ENCODE measurements at regions of chr1 and their contacts with region 1.

Region 1: GRCh38 chr1:182143154-182143657 is 81.7 kb upstream of the ZNF648 start:
- DNase-seq: peak; percentile 67 to 85
- H3K4me3 ChIP-seq: no peak overlapping the region
- H3K27ac ChIP-seq: no peak overlapping the region
- H3K4me1 ChIP-seq: peaks cover 48% of the 10 kb centered on the region
- H3K27me3 ChIP-seq: no peaks in the 10 kb centered on the region
- CTCF ChIP-seq: peak; percentile 97

Region 2: GRCh38 chr1:182101415-182102042 is 41.7 kb before region 1 on chr1:
- CTCF ChIA-PET with region 1: interaction called, 3 read pairs
- POLR2A ChIA-PET with region 1: no interaction called
- intact Hi-C with region 1: loop called (anchors 1 kb)
- DNase-seq: peak; percentile 91 to 95
- H3K4me3 ChIP-seq: peak overlapping the region; percentile 0; the same call in 1 of the 2 replicates
- H3K27ac ChIP-seq: peak overlapping the region; percentile 54
- H3K4me1 ChIP-seq: peaks cover 24% of the 10 kb centered on the region
- H3K27me3 ChIP-seq: no peaks in the 10 kb centered on the region
- CTCF ChIP-seq: no peak

Region 3: DNA sequence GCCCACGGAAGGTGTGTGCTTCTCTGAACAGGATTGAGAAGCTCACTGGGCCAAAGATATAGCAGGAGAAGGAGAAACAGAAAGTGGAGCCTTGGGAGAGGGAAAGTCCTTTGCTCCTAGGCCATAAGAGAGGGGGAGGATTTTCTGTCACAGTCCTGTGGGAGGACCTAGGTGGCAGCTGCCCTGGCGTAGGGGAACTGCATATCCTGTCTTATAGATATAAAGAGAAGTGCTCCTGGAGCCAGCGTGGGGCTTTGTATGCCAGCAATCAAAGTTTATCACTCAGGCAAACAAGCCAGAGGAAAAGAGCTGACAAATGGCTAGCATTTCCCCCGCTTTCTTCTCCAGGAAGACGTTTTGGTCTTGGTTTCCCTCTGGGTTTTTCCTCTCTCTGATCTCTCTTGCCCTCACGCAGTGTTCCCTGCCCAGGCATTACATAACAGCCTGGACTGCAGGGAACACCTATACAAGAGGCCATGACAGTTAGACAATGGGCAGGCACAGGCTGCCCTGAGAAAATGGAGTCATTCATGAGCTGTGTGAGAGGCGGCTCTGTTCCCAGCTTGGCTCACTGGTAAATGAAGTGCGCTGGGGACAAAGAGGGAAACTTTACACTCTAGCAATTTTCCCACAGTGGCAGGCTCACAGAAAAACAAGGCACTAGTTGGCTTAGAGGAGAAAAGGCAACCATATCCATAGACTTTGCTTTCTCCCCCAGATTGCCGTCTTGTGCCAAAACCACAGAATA is 29.2 kb before region 1 on chr1:
- CTCF ChIA-PET with region 1: no interaction called
- POLR2A ChIA-PET with region 1: no interaction called
- intact Hi-C with region 1: no loop called
- DNase-seq: no peak
- H3K4me3 ChIP-seq: no peak overlapping the region
- H3K27ac ChIP-seq: no peak overlapping the region
- H3K4me1 ChIP-seq: no peaks in the 10 kb centered on the region
- H3K27me3 ChIP-seq: no peaks in the 10 kb centered on the region
- CTCF ChIP-seq: no peak

Region 4: GRCh38 chr1:182229921-182230491 is 86.8 kb after region 1 on chr1:
- CTCF ChIA-PET with region 1: interaction called, 15 read pairs
- POLR2A ChIA-PET with region 1: no interaction called
- intact Hi-C with region 1: no loop called
- DNase-seq: peak in 1 of 2 experiments; percentile 70
- H3K4me3 ChIP-seq: no peak overlapping the region
- H3K27ac ChIP-seq: no peak overlapping the region
- H3K4me1 ChIP-seq: peaks cover 39% of the 10 kb centered on the region
- H3K27me3 ChIP-seq: no peaks in the 10 kb centered on the region
- CTCF ChIP-seq: no peak

Region 5: GRCh38 chr1:182299728-182300616 is 156.8 kb after region 1 on chr1:
- CTCF ChIA-PET with region 1: no interaction called
- POLR2A ChIA-PET with region 1: no interaction called
- intact Hi-C with region 1: loop called (anchors 10 kb)
- DNase-seq: peak; percentile 13 to 48
- H3K4me3 ChIP-seq: no peak overlapping the region
- H3K27ac ChIP-seq: no peak overlapping the region
- H3K4me1 ChIP-seq: peaks cover 21% of the 10 kb centered on the region
- H3K27me3 ChIP-seq: no peaks in the 10 kb centered on the region
- CTCF ChIP-seq: no peak

Region 6: GRCh38 chr1:182397771-182398393 is 254.7 kb after region 1 on chr1:
- CTCF ChIA-PET with region 1: interaction called, 33 read pairs
- POLR2A ChIA-PET with region 1: interaction called, 5 read pairs
- intact Hi-C with region 1: loop called (anchors 1 kb)
- DNase-seq: peak; percentile 58 to 95
- H3K4me3 ChIP-seq: no peak overlapping the region
- H3K27ac ChIP-seq: peak overlapping the region; percentile 89
- H3K4me1 ChIP-seq: peaks cover 25% of the 10 kb centered on the region
- H3K27me3 ChIP-seq: no peaks in the 10 kb centered on the region
- CTCF ChIP-seq: no peak

Region 7: DNA sequence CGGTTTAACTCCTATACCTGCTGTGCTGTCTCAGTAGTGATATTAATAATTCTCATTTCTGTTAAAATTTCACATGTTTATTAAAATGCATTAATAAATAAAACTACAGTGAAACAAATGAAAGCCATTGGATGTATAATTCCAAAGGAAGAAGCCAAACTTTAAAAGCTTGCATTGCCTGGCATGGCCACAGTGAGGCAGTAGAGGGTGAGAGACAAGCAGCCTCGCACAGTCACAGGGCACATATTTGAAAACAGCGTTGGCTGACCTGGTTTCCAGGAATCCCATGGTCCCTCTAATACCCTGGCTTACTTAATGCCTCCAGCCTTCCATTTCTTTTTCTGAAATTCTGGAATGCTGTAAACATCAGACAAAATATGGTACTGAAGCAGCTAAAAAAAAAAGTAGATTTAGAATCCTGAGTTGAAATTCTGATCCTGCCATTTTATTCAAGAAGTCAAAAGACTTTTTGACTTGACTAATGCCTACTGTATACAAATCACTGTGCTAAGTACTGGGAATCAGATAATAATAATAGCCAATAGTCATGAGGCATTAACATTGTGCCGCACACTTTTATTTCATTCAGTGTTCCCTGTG is 452.5 kb after region 1 on chr1:
- CTCF ChIA-PET with region 1: no interaction called
- POLR2A ChIA-PET with region 1: interaction called, 13 read pairs
- intact Hi-C with region 1: loop called (anchors 1 kb)
- DNase-seq: peak; percentile 40 to 45
- H3K4me3 ChIP-seq: no peak overlapping the region
- H3K27ac ChIP-seq: no peak overlapping the region
- H3K4me1 ChIP-seq: no peaks in the 10 kb centered on the region
- H3K27me3 ChIP-seq: no peaks in the 10 kb centered on the region
- CTCF ChIP-seq: peak; percentile 88